Activated CD4-positive, alpha-beta T cell treated with anti-CD3 and anti-CD28 coated beads for 36 hours (primary cell): ENCODE measurements at regions of chr10 and their contacts with region 1.

Region 1: GRCh38 chr10:97914837-97915211 is 65.2 kb downstream of the GOLGA7B start:
- DNase-seq: peak; percentile 90
- ATAC-seq: peak; percentile 98
- H3K4me3 Mint-ChIP-seq: no peak overlapping the region
- H3K27ac Mint-ChIP-seq: no peak overlapping the region
- H3K4me1 Mint-ChIP-seq: peaks cover 4% of the 10 kb centered on the region
- H3K27me3 Mint-ChIP-seq: peaks cover 4% of the 10 kb centered on the region

Region 2: GRCh38 chr10:97903128-97904017 is 11.5 kb before region 1 on chr10:
- CTCF ChIA-PET with region 1: interaction called, 10 read pairs
- POLR2A ChIA-PET with region 1: no interaction called
- intact Hi-C with region 1: no loop called
- DNase-seq: no peak
- ATAC-seq: no peak
- H3K4me3 Mint-ChIP-seq: no peak overlapping the region
- H3K27ac Mint-ChIP-seq: no peak overlapping the region
- H3K4me1 Mint-ChIP-seq: no peaks in the 10 kb centered on the region
- H3K27me3 Mint-ChIP-seq: peaks cover 10% of the 10 kb centered on the region

Region 3: GRCh38 chr10:97961979-97962378 is 47.2 kb after region 1 on chr10:
- CTCF ChIA-PET with region 1: no interaction called
- POLR2A ChIA-PET with region 1: no interaction called
- intact Hi-C with region 1: no loop called
- DNase-seq: no peak
- ATAC-seq: no peak
- H3K4me3 Mint-ChIP-seq: no peak overlapping the region
- H3K27ac Mint-ChIP-seq: no peak overlapping the region
- H3K4me1 Mint-ChIP-seq: no peaks in the 10 kb centered on the region
- H3K27me3 Mint-ChIP-seq: peaks cover 36% of the 10 kb centered on the region

Region 4: GRCh38 chr10:98028168-98028770 is 113.4 kb after region 1 on chr10:
- CTCF ChIA-PET with region 1: interaction called, 11 read pairs
- POLR2A ChIA-PET with region 1: no interaction called
- intact Hi-C with region 1: loop called (anchors 1 to 5 kb)
- DNase-seq: peak; percentile 85
- ATAC-seq: peak; percentile 92
- H3K4me3 Mint-ChIP-seq: no peak overlapping the region
- H3K27ac Mint-ChIP-seq: no peak overlapping the region
- H3K4me1 Mint-ChIP-seq: peaks cover 3% of the 10 kb centered on the region
- H3K27me3 Mint-ChIP-seq: peaks cover 39% of the 10 kb centered on the region

Region 5: DNA sequence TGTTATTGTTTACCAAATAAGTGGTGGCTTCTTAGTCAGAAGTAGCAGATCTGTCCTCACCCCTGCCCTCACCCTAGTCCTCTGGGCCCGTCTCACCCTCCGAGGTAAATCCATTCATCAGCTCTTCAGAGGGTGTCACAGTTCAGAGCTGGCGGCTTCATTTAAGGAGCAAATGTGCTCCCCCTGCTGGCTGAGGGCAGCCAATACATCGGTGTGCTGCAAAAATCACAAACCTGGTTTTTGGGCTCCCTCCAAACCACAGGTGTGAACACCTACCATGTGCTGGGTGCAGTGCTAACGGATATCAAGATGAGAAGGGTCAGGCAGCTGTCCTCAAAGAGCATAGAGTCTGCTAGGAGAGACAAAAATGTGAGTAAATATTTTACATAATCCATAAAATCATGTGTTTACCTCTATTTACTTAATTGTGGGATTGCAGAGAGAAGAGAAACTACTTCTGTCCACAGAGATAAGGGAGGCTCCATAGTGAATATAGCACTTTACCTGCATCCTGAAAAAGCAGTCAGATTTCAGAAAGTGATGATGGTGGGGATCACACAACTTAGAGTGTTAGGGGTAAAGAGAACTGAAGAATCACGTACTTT is 131.1 kb after region 1 on chr10:
- CTCF ChIA-PET with region 1: interaction called, 73 read pairs
- POLR2A ChIA-PET with region 1: no interaction called
- intact Hi-C with region 1: loop called (anchors 1 kb)
- DNase-seq: peak; percentile 80
- ATAC-seq: peak; percentile 96
- H3K4me3 Mint-ChIP-seq: no peak overlapping the region
- H3K27ac Mint-ChIP-seq: no peak overlapping the region
- H3K4me1 Mint-ChIP-seq: no peaks in the 10 kb centered on the region
- H3K27me3 Mint-ChIP-seq: peaks cover 24% of the 10 kb centered on the region

Region 6: GRCh38 chr10:98309366-98310355 is 394.8 kb after region 1 on chr10:
- CTCF ChIA-PET with region 1: interaction called, 7 read pairs
- POLR2A ChIA-PET with region 1: no interaction called
- intact Hi-C with region 1: loop called in 1 of 2 experiments (anchors 2 kb)
- DNase-seq: peak; percentile 46
- ATAC-seq: no peak
- H3K4me3 Mint-ChIP-seq: no peak overlapping the region
- H3K27ac Mint-ChIP-seq: no peak overlapping the region
- H3K4me1 Mint-ChIP-seq: no peaks in the 10 kb centered on the region
- H3K27me3 Mint-ChIP-seq: peaks cover 20% of the 10 kb centered on the region

Region 7: GRCh38 chr10:98664331-98665042 is 749.7 kb after region 1 on chr10:
- CTCF ChIA-PET with region 1: no interaction called
- POLR2A ChIA-PET with region 1: no interaction called
- intact Hi-C with region 1: loop called in 1 of 2 experiments (anchors 5 kb)
- DNase-seq: peak; percentile 49
- ATAC-seq: peak; percentile 70
- H3K4me3 Mint-ChIP-seq: no peak overlapping the region
- H3K27ac Mint-ChIP-seq: no peak overlapping the region
- H3K4me1 Mint-ChIP-seq: no peaks in the 10 kb centered on the region
- H3K27me3 Mint-ChIP-seq: peaks cover 25% of the 10 kb centered on the region

Region 8: DNA sequence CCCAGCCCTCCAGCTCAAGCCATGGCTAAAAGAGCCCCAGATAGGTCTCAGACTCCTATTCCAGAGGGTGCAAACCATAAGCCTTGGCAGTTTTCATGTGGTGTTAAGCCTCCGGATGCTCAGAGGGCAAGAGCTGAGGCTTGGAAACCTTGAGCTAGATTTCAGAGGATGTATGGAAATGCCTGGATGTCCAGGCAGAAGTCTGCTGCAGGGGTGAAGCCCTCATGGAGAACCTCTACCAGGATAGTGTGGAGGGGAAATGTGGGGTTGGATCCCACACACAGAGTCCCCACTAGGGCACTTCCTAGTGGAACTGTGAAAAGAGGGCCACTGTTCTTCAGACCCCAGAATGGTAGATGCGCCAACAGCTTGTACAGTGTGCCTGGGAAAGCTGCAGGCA is 1334.0 kb after region 1 on chr10:
- CTCF ChIA-PET with region 1: no interaction called
- POLR2A ChIA-PET with region 1: no interaction called
- intact Hi-C with region 1: loop called in 1 of 2 experiments (anchors 2 kb)
- DNase-seq: no peak
- ATAC-seq: no peak
- H3K4me3 Mint-ChIP-seq: no peak overlapping the region
- H3K27ac Mint-ChIP-seq: no peak overlapping the region
- H3K4me1 Mint-ChIP-seq: no peaks in the 10 kb centered on the region
- H3K27me3 Mint-ChIP-seq: peaks cover 31% of the 10 kb centered on the region